ENCODE measurements at regions of chr7 and their contacts with region 1.

Region 1: DNA sequence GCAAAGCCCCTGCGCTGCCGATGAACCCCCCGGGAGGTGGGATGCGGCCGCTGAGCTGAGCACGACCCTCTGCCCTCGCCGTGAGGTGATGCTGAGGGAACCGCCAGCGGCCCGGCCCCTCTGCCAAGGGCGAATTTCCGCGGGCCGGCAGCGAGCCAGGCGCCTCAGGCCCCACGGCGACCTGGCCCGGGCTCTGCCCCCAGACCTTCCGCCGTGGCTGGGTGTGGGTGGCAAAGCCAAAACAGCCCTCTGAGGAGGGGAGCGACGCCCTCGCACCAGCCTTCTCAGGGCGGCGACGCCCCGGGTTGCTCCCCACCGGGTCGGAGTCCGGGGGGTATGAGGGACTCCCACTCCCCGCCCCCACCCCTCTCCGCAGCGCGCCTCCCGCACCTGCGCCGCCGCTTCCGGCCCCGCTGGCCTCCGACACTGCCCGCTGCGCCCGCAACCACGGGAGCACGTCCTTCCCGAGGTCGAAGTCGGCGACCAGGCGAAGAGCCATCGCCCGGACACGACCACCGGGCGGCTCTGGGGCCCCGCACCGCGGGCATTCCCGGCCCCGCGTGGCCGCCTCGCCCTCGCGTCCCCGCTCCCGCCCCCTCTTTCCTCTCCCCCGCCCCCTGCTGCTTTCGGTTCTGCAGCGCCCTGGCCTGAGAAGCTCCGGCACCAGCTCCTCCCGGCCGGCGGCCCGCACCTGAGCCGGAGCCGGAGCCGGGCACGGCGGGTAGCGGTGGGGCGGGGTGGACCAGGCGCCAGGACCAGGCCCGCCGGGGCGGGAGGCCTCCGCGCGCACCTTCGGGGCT is at the start of gene GSAP:
- DNase-seq: peak; percentile 62 to 76
- ATAC-seq: peak; percentile 81 to 88 (median 85)
- H3K4me3 ChIP-seq: peak within 1 kb of the TSS; percentile 94
- H3K27ac ChIP-seq: peak within 1 kb of the TSS; percentile 88
- H3K4me1 ChIP-seq: peaks cover 9% of the 10 kb centered on the region
- H3K27me3 ChIP-seq: no peaks in the 10 kb centered on the region
- CTCF ChIP-seq: no peak
- total RNA-seq, gene GSAP: 2.0 to 4.2 (median 3.3) TPM

Region 2: GRCh38 chr7:77351539-77352004 is 64.5 kb before region 1 on chr7:
- intact Hi-C with region 1: no loop called
- DNase-seq: no peak
- ATAC-seq: peak in 2 of 4 donors; percentile 30 to 49
- H3K4me3 ChIP-seq: no peak overlapping the region
- H3K27ac ChIP-seq: peak overlapping the region; percentile 18
- H3K4me1 ChIP-seq: peaks cover 6% of the 10 kb centered on the region
- H3K27me3 ChIP-seq: no peaks in the 10 kb centered on the region
- CTCF ChIP-seq: no peak

Region 3: GRCh38 chr7:77536413-77537135 is 120.6 kb after region 1 on chr7:
- intact Hi-C with region 1: loop called in 1 of 2 experiments (anchors 5 kb)
- DNase-seq: peak; percentile 99
- ATAC-seq: peak; percentile 91 to 95 (median 94)
- H3K4me3 ChIP-seq: peak overlapping the region; percentile 86
- H3K27ac ChIP-seq: peak overlapping the region; percentile 93
- H3K4me1 ChIP-seq: peaks cover 21% of the 10 kb centered on the region
- H3K27me3 ChIP-seq: no peaks in the 10 kb centered on the region
- CTCF ChIP-seq: no peak

Measured in psoas muscle (tissue), 8 donors.